PC-3 (cell line): ENCODE measurements at regions of chrX and their contacts with region 1.

Region 1: GRCh38 chrX:109890895-109891502 is 111.9 kb upstream of the TMEM164 start:
- DNase-seq: peak; percentile 74
- ATAC-seq: peak; percentile 84
- H3K4me3 ChIP-seq: no peak overlapping the region
- H3K27ac ChIP-seq: no peak overlapping the region
- H3K4me1 ChIP-seq: no peaks in the 10 kb centered on the region
- H3K27me3 ChIP-seq: no peaks in the 10 kb centered on the region
- CTCF ChIP-seq: peak; percentile 89

Region 2: GRCh38 chrX:109709129-109709631 is 181.8 kb before region 1 on chrX:
- CTCF ChIA-PET with region 1: interaction called, 8 read pairs
- POLR2A ChIA-PET with region 1: no interaction called
- intact Hi-C with region 1: loop called (anchors 1 kb)
- DNase-seq: peak; percentile 66
- ATAC-seq: peak; percentile 48
- H3K4me3 ChIP-seq: peak overlapping the region; percentile 27; the same call in 1 of the 2 replicates
- H3K27ac ChIP-seq: peak overlapping the region; percentile 9; the same call in 1 of the 2 replicates
- H3K4me1 ChIP-seq: peaks cover 19% of the 10 kb centered on the region
- H3K27me3 ChIP-seq: no peaks in the 10 kb centered on the region
- CTCF ChIP-seq: no peak; the same call in 1 of the 2 replicates

Region 3: GRCh38 chrX:110210417-110211139 is 319.6 kb after region 1 on chrX:
- CTCF ChIA-PET with region 1: no interaction called
- POLR2A ChIA-PET with region 1: no interaction called
- intact Hi-C with region 1: no loop called
- DNase-seq: peak; percentile 84
- ATAC-seq: peak; percentile 90
- H3K4me3 ChIP-seq: peak overlapping the region; percentile 37; the same call in 1 of the 2 replicates
- H3K27ac ChIP-seq: peak overlapping the region; percentile 94
- H3K4me1 ChIP-seq: peaks cover 43% of the 10 kb centered on the region
- H3K27me3 ChIP-seq: no peaks in the 10 kb centered on the region
- CTCF ChIP-seq: no peak